ENCODE measurements at regions of chr15 and their contacts with region 1.

Region 1: DNA sequence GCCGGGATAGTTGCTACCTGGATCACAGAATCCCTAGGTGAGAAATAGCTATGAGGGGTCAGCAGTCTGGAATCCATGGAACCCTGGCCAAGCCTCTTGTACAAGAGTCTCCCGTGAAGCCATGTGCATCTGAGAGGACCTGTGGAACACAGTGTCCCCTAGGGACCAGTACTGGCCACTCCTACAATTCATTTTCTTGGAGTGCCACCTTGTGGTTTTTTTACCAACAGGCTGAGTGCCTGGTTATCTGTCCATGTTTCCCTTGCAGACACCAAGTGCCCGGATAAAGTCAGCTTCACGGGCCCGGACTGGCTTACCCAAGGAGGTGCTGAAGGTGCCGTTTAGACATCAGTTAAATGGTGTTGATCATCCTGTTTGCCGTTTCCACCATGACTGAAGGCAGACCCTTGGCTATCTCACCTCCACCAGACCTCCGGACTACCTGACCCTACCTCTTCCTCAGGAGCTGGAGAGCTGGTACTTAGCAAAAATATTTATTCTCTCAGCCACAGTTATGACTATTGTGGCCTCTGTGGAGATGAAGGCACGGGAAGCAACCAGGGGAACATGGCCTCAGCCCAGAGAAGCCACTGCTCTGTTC is 93.9 kb downstream of the RBPMS2 start:
- DNase-seq: peak; percentile 32
- ATAC-seq: peak; percentile 94
- H3K4me3 ChIP-seq: no peak overlapping the region
- H3K27ac ChIP-seq: no peak overlapping the region
- H3K4me1 ChIP-seq: 0 out of 2 replicates have a peak, but pooled peaks cover 6% of the 10 kb centered on the region
- H3K27me3 ChIP-seq: no peaks in the 10 kb centered on the region
- CTCF ChIP-seq: peak; percentile 88

Region 2: DNA sequence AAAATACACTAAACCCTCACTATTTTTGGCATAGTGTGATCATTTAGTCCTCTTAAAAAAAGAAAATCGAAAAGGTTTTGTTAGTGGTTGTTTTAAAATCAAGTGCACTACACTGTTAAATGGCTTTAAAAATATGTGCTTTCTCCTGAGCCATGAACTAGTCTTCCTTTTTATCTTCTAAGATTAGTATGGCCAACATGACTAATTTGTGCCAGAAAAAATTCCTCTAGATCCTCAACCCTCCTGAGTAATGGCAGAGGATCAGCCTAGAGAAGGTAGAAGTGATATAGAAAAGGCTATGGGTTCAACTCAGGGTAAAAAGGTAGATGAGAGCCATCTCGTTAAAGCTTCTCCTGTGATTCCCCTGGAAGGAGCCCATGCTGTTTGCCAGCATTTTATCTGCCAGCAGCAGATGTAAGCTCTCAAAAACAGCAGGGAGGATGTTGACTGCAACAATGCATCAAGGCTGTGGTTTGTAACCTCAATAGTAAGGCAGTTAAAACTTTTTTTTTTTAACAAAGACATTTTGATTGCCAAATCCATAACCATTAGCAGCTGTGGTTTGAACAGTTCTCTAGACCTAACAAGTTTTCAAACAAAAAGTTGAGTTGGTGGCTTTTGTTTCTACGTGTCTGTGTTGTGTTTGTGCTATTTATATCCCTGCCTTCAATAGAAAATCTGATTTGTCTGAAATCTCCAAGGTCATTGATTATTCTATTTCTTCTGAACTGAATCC is 251.4 kb before region 1 on chr15:
- CTCF ChIA-PET with region 1: interaction called, 3 read pairs
- POLR2A ChIA-PET with region 1: no interaction called
- in situ Hi-C with region 1: no loop called
- intact Hi-C with region 1: loop called (anchors 10 kb)
- DNase-seq: no peak
- ATAC-seq: no peak
- H3K4me3 ChIP-seq: no peak overlapping the region
- H3K27ac ChIP-seq: no peak overlapping the region
- H3K4me1 ChIP-seq: no peaks in the 10 kb centered on the region
- H3K27me3 ChIP-seq: no peaks in the 10 kb centered on the region
- CTCF ChIP-seq: no peak

Region 3: DNA sequence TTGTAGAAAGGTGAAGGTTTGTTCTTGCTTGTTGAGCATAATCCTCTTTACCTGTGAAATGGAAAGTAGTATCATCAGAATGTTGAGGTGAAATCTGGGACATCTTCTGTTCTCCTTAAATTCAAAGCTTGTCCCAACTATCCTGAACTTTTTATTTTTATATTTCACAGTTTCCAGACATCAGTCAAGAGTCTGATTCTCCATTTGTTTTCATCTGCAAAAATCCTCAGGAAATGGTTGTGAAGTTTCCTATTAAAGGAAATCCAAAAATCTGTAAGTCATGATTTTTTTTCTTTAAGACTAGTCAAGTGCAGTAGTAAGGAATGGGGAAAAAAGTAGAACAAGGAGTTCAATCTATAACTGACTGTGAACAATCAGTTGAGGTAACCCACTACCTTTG is 236.7 kb before region 1 on chr15:
- CTCF ChIA-PET with region 1: interaction called, 13 read pairs
- POLR2A ChIA-PET with region 1: no interaction called
- in situ Hi-C with region 1: no loop called
- intact Hi-C with region 1: loop called (anchors 10 kb)
- DNase-seq: no peak
- ATAC-seq: no peak
- H3K4me3 ChIP-seq: no peak overlapping the region
- H3K27ac ChIP-seq: no peak overlapping the region
- H3K4me1 ChIP-seq: peaks cover 16% of the 10 kb centered on the region
- H3K27me3 ChIP-seq: no peaks in the 10 kb centered on the region
- CTCF ChIP-seq: no peak

Region 4: GRCh38 chr15:64460206-64460734 is 221.3 kb before region 1 on chr15 and contains the start of gene ZNF609:
- CTCF ChIA-PET with region 1: no interaction called
- POLR2A ChIA-PET with region 1: no interaction called
- in situ Hi-C with region 1: no loop called
- intact Hi-C with region 1: loop called (anchors 10 kb)
- DNase-seq: peak; percentile 64
- ATAC-seq: peak; percentile 93
- H3K4me3 ChIP-seq: peak within 1 kb of the TSS; percentile 58 to 89
- H3K27ac ChIP-seq: peak within 1 kb of the TSS; percentile 89
- H3K4me1 ChIP-seq: peaks cover 38% of the 10 kb centered on the region
- H3K27me3 ChIP-seq: no peaks in the 10 kb centered on the region
- CTCF ChIP-seq: no peak
- total RNA-seq, gene ZNF609: 47.2 TPM

Region 5: GRCh38 chr15:64622410-64623260 is 58.9 kb before region 1 on chr15:
- CTCF ChIA-PET with region 1: no interaction called
- POLR2A ChIA-PET with region 1: no interaction called
- in situ Hi-C with region 1: no loop called
- intact Hi-C with region 1: no loop called
- DNase-seq: no peak
- ATAC-seq: no peak
- H3K4me3 ChIP-seq: no peak overlapping the region
- H3K27ac ChIP-seq: no peak overlapping the region
- H3K4me1 ChIP-seq: no peaks in the 10 kb centered on the region
- H3K27me3 ChIP-seq: no peaks in the 10 kb centered on the region
- CTCF ChIP-seq: no peak

Region 6: GRCh38 chr15:64731012-64731806 is 49.7 kb after region 1 on chr15:
- CTCF ChIA-PET with region 1: interaction called, 35 read pairs
- POLR2A ChIA-PET with region 1: no interaction called
- in situ Hi-C with region 1: no loop called
- intact Hi-C with region 1: loop called (anchors 2 kb)
- DNase-seq: peak; percentile 54
- ATAC-seq: peak; percentile 91
- H3K4me3 ChIP-seq: no peak overlapping the region
- H3K27ac ChIP-seq: no peak overlapping the region
- H3K4me1 ChIP-seq: peaks cover 3% of the 10 kb centered on the region; the same call in 1 of the 2 replicates
- H3K27me3 ChIP-seq: no peaks in the 10 kb centered on the region
- CTCF ChIP-seq: peak; percentile 95

Region 7: DNA sequence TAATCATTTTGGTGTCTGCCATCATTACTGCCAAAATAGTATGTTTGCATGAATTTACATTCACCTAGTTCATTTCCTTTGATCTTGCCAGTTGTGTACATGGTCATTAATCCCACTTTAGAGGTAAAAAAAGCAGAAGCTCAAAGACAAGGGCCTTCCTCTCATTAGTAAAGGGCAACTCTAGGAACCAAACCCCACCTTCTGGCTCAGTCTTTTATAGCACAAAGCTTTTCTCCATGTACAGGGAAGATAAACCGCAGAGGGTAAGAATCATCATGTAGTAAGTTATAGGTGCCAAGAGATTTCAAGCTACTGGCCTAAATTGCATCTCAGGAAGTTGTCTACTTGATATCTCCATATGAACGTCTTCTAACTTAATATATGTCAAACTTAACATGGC is 327.5 kb after region 1 on chr15:
- CTCF ChIA-PET with region 1: interaction called, 10 read pairs
- POLR2A ChIA-PET with region 1: no interaction called
- in situ Hi-C with region 1: no loop called
- intact Hi-C with region 1: no loop called
- DNase-seq: no peak
- ATAC-seq: no peak
- H3K4me3 ChIP-seq: no peak overlapping the region
- H3K27ac ChIP-seq: no peak overlapping the region
- H3K4me1 ChIP-seq: no peaks in the 10 kb centered on the region
- H3K27me3 ChIP-seq: no peaks in the 10 kb centered on the region
- CTCF ChIP-seq: no peak; the same call in 1 of the 2 replicates

Region 8: GRCh38 chr15:65134538-65134937 is 453.0 kb after region 1 on chr15:
- CTCF ChIA-PET with region 1: no interaction called
- POLR2A ChIA-PET with region 1: no interaction called
- in situ Hi-C with region 1: no loop called
- intact Hi-C with region 1: no loop called
- DNase-seq: no peak
- ATAC-seq: no peak
- H3K4me3 ChIP-seq: peak overlapping the region; percentile 67 to 84; a peak in 3 of 4 replicates
- H3K27ac ChIP-seq: peak overlapping the region; percentile 75
- H3K4me1 ChIP-seq: peaks cover 7% of the 10 kb centered on the region; the same call in 1 of the 2 replicates
- H3K27me3 ChIP-seq: no peaks in the 10 kb centered on the region
- CTCF ChIP-seq: no peak